Posterior cingulate gyrus (tissue), 11 donors: ENCODE measurements at regions of chr17 and their contacts with region 1.

Region 1: DNA sequence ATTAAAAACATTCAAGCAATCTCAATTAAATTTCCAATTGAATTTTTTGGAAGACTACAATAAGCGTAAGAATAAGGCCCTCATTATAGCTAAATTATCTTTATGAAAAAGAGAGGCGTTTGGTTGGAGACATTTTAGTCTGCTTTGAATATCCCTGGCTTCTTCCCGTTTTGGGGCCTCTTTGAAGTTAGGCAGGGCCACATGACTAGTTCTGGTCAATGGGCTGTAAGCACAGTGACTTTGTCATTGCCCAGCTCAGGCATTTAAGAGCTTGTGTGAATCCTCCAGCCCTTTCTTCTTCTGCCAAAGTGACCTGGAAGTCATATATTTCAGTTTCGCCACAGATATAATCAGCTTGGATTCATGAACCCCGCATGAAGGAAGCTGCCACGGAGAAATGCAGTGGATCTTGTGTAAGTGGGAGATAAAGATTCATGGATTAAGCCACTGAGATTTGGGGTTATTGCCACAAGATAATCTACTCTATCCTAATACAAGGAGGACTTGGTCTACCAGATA is 21.7 kb upstream of the UBTF start:
- DNase-seq: no peak

Region 2: DNA sequence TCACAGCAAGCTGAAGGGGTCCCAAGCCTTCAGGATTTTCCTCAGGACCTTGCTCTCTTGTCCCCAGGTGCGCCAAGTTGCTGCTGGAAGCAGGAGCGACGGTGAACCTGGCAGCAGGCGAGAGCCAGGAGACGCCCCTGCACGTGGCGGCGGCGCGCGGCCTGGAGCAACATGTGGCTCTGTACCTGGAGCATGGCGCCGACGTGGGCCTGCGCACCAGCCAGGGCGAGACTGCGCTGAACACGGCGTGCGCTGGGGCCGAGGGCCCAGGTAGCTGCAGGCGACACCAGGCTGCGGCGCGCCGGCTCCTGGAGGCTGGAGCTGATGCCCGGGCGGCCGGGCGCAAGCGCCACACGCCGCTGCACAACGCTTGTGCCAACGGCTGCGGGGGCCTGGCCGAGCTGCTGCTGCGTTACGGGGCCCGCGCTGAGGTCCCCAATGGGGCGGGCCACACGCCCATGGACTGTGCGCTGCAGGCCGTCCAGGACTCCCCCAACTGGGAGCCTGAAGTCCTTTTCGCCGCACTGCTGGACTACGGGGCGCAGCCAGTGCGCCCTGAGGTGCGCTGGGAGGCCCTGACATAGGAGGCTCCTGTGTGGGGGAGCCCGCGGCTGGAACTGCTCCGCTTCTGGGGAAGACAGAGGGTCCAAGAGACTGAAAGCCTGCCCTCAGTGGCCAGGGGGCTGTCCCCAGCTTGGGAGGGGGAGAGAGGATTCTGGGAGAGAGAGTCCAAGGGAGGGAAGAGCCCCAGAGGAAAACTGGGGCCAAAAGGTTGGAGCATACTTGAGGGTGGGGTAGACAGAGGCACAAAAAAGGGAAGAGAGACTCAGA is 64.3 kb before region 1 on chr17:
- intact Hi-C with region 1: no loop called
- DNase-seq: peak in 2 of 10 donors; percentile 53 to 70

Region 3: DNA sequence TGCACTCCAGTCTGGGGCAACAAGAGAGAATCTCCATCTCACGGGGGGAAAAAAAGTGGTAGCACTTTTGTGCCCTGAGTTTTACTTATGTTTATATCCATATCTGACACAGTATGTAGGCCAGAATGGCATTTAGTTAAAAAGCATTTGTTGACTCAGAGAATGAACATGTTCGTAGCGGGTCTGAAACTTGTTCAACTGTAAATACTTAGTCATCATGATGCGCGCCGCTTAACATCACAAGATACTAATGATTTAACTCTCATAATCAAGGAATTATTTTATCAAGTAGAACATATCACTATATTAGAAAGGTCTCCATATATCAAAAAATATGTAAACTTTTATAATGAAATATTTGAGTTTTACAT is 203.6 kb after region 1 on chr17:
- intact Hi-C with region 1: loop called (anchors 5 kb)
- DNase-seq: no peak